CD4-positive, alpha-beta memory T cell (primary cell): ENCODE measurements at regions of chr2 and their contacts with region 1.

Region 1: GRCh38 chr2:13006829-13007717 is 290.3 kb downstream of the TRIB2 start:
- DNase-seq: peak; percentile 49 to 67 (median 61)
- H3K4me3 ChIP-seq: no peak overlapping the region
- H3K4me3 Mint-ChIP-seq: no peak overlapping the region
- H3K27ac ChIP-seq: no peak overlapping the region
- H3K27ac Mint-ChIP-seq: no peak overlapping the region
- H3K4me1 ChIP-seq: peaks cover 5% of the 10 kb centered on the region
- H3K4me1 Mint-ChIP-seq: peaks cover 0 to 7% (median 3%) of the 10 kb centered on the region in 4 donors
- H3K27me3 ChIP-seq: no peaks in the 10 kb centered on the region
- H3K27me3 Mint-ChIP-seq: peaks cover 0 to 2% of the 10 kb centered on the region in 2 donors

Region 2: GRCh38 chr2:11688222-11689069 is 1318.6 kb before region 1 on chr2:
- CTCF ChIA-PET with region 1: interaction called, 11 read pairs
- POLR2A ChIA-PET with region 1: no interaction called
- intact Hi-C with region 1: loop called (anchors 2 kb)
- DNase-seq: peak; percentile 69 to 75 (median 74)
- H3K4me3 ChIP-seq: no peak overlapping the region
- H3K4me3 Mint-ChIP-seq: peak overlapping the region in 7 of 8 donors; percentile 14 to 69 (median 51)
- H3K27ac ChIP-seq: no peak overlapping the region
- H3K27ac Mint-ChIP-seq: peak overlapping the region in 4 of 7 donors; percentile 13 to 74 (median 18)
- H3K4me1 ChIP-seq: peaks cover 11% of the 10 kb centered on the region
- H3K4me1 Mint-ChIP-seq: peaks cover 5 to 10% (median 9%) of the 10 kb centered on the region in 4 donors
- H3K27me3 ChIP-seq: no peaks in the 10 kb centered on the region
- H3K27me3 Mint-ChIP-seq: peaks cover 3 to 8% of the 10 kb centered on the region in 2 donors

Region 3: GRCh38 chr2:11758647-11759046 is 1248.4 kb before region 1 on chr2:
- CTCF ChIA-PET with region 1: no interaction called
- POLR2A ChIA-PET with region 1: no interaction called
- intact Hi-C with region 1: no loop called
- DNase-seq: no peak
- H3K4me3 ChIP-seq: no peak overlapping the region
- H3K4me3 Mint-ChIP-seq: peak overlapping the region in 4 of 8 donors; percentile 1 to 26 (median 13)
- H3K27ac ChIP-seq: no peak overlapping the region
- H3K27ac Mint-ChIP-seq: peak overlapping the region; percentile 78 to 96 (median 89)
- H3K4me1 ChIP-seq: peaks cover 71% of the 10 kb centered on the region
- H3K4me1 Mint-ChIP-seq: peaks cover 54 to 82% (median 69%) of the 10 kb centered on the region in 4 donors
- H3K27me3 ChIP-seq: no peaks in the 10 kb centered on the region
- H3K27me3 Mint-ChIP-seq: no peaks in the 10 kb centered on the region

Region 4: GRCh38 chr2:11863513-11864328 is 1143.4 kb before region 1 on chr2:
- CTCF ChIA-PET with region 1: interaction called, 63 read pairs
- POLR2A ChIA-PET with region 1: no interaction called
- intact Hi-C with region 1: loop called (anchors 1 kb)
- DNase-seq: peak; percentile 59 to 67 (median 63)
- H3K4me3 ChIP-seq: peak overlapping the region in 1 of 2 donors; percentile 18
- H3K4me3 Mint-ChIP-seq: peak overlapping the region; percentile 54 to 87 (median 72)
- H3K27ac ChIP-seq: peak overlapping the region; percentile 3
- H3K27ac Mint-ChIP-seq: peak overlapping the region in 3 of 7 donors; percentile 26 to 50 (median 31)
- H3K4me1 ChIP-seq: peaks cover 25% of the 10 kb centered on the region
- H3K4me1 Mint-ChIP-seq: peaks cover 19 to 38% (median 23%) of the 10 kb centered on the region in 4 donors
- H3K27me3 ChIP-seq: no peaks in the 10 kb centered on the region
- H3K27me3 Mint-ChIP-seq: no peaks in the 10 kb centered on the region

Region 5: DNA sequence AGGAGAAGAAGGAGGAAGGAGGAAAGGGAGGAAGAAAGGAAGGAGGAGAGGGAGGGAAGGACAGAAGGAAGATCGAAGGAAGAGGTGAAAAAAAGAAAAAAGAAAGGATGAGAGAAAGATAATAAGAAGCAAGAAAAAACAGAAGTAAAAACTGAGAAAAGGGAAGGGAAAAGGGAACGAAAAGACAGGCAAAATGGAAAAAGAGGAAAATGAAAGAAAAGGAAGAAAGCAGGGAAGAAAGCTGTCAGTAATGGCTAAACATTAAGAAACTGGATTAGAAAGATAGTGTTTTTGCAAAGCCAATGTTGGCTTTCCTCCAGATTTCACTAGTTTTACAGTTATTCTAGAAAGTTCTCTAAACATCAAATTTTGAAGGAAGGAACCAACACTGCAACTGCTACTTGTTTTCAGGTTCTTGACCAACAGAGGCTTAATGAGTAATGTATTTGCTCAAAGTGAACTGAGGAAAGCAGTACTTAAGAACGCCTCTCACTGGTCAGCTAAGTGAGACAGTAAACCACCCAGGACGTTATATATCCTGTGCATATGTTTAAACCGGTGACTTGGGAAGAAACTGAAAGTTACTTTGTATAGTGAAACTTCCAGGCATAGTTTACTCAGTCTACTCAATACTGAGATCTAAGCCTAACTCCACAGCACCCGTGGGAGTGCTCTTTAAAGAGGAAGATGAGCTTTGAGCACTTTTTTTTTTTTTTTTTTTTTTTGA is 576.5 kb before region 1 on chr2:
- CTCF ChIA-PET with region 1: interaction called, 15 read pairs
- POLR2A ChIA-PET with region 1: no interaction called
- intact Hi-C with region 1: no loop called
- DNase-seq: peak in 3 of 5 donors; percentile 9 to 26 (median 21)
- H3K4me3 ChIP-seq: peak overlapping the region in 1 of 2 donors; percentile 27
- H3K4me3 Mint-ChIP-seq: peak overlapping the region; percentile 50 to 83 (median 78)
- H3K27ac ChIP-seq: no peak overlapping the region
- H3K27ac Mint-ChIP-seq: peak overlapping the region; percentile 59 to 93 (median 88)
- H3K4me1 ChIP-seq: peaks cover 28% of the 10 kb centered on the region
- H3K4me1 Mint-ChIP-seq: peaks cover 19 to 44% (median 29%) of the 10 kb centered on the region in 4 donors
- H3K27me3 ChIP-seq: no peaks in the 10 kb centered on the region
- H3K27me3 Mint-ChIP-seq: no peaks in the 10 kb centered on the region

Region 6: DNA sequence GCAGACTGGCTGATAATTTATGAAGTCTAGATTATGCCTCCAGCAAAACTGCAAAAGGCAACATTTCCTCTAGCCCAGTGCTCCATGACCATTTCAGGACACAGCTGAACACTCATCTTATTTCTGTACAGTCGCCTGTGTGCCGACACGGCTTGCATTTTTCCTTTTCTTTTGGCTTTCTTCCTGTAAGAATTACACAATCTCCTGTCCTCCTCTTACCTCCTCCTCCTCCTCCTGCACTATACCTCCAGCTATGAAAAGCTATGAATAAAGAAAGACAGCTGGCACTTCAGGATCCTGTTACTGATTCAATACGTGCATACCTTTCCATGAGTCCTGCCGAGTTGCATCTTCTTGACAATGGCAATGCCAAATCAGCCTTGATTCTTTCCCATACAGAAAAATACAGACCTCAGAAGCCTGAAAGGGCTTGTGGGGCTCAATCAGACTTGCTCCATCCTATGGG is 322.6 kb before region 1 on chr2:
- CTCF ChIA-PET with region 1: no interaction called
- POLR2A ChIA-PET with region 1: no interaction called
- intact Hi-C with region 1: no loop called
- DNase-seq: no peak
- H3K4me3 ChIP-seq: no peak overlapping the region
- H3K4me3 Mint-ChIP-seq: no peak overlapping the region
- H3K27ac ChIP-seq: no peak overlapping the region
- H3K27ac Mint-ChIP-seq: no peak overlapping the region
- H3K4me1 ChIP-seq: no peaks in the 10 kb centered on the region
- H3K4me1 Mint-ChIP-seq: peaks cover 0 to 8% (median 3%) of the 10 kb centered on the region in 4 donors
- H3K27me3 ChIP-seq: no peaks in the 10 kb centered on the region
- H3K27me3 Mint-ChIP-seq: peaks cover 0 to 2% of the 10 kb centered on the region in 2 donors

Region 7: DNA sequence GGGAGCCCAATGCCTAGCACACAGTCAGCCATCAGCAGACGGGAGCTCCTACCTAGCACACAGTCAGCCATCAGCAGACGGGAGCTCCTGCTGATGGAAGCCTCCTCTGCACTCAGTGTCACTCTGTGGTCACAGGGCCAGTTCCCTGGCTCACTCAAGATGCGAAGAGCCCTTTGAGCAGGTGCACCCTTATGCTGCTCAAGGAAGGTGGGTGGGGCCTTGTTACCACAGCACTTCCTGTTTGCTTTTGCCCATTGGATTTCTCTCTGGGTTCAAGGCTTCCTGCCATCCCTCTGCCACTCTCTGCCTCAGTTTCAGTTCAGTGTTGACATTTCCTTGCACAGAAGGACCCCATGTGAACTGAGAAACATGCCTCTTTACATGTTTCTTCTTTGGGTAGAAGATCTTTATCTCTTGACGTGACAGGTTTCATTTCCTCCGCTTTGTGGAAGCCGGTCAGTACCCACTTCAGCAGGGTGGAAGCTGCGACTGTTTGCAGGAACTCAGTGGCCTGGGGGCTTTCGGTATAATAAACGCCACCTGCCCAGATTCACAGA is 278.8 kb before region 1 on chr2:
- CTCF ChIA-PET with region 1: interaction called, 30 read pairs
- POLR2A ChIA-PET with region 1: interaction called, 3 read pairs
- intact Hi-C with region 1: no loop called
- DNase-seq: peak; percentile 76 to 86 (median 83)
- H3K4me3 ChIP-seq: peak overlapping the region; percentile 29 to 34
- H3K4me3 Mint-ChIP-seq: peak overlapping the region; percentile 65 to 86 (median 78)
- H3K27ac ChIP-seq: peak overlapping the region; percentile 47
- H3K27ac Mint-ChIP-seq: peak overlapping the region; percentile 87 to 96 (median 91)
- H3K4me1 ChIP-seq: peaks cover 100% of the 10 kb centered on the region
- H3K4me1 Mint-ChIP-seq: peaks cover 70 to 99% (median 92%) of the 10 kb centered on the region in 4 donors
- H3K27me3 ChIP-seq: no peaks in the 10 kb centered on the region
- H3K27me3 Mint-ChIP-seq: no peaks in the 10 kb centered on the region

Region 8: DNA sequence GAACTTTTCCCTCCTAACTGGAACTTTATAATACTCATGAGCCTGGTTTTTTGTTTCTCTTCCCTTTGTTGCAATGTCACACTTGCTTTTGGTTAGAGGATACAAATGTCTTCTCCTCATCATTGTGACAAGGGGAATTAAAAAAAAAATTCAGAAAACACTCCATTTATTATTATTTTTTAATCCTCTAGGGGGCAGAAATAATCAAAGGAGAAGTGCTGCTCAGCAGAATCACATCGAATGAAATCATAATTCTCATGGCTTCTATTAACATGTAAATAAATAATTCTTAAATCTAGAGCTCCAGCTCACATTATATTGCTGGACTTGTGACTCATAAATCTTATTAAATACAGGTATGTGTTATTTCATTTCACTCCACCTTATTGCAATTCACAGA is 16.6 kb before region 1 on chr2:
- CTCF ChIA-PET with region 1: interaction called, 24 read pairs
- POLR2A ChIA-PET with region 1: no interaction called
- intact Hi-C with region 1: no loop called
- DNase-seq: no peak
- H3K4me3 ChIP-seq: no peak overlapping the region
- H3K4me3 Mint-ChIP-seq: no peak overlapping the region
- H3K27ac ChIP-seq: no peak overlapping the region
- H3K27ac Mint-ChIP-seq: no peak overlapping the region
- H3K4me1 ChIP-seq: peaks cover 9% of the 10 kb centered on the region
- H3K4me1 Mint-ChIP-seq: peaks cover 5 to 10% (median 8%) of the 10 kb centered on the region in 4 donors
- H3K27me3 ChIP-seq: no peaks in the 10 kb centered on the region
- H3K27me3 Mint-ChIP-seq: peaks cover 0 to 2% of the 10 kb centered on the region in 2 donors